Colonic mucosa (tissue), 4 donors: ENCODE measurements at regions of chr1 and their contacts with region 1.

Region 1: DNA sequence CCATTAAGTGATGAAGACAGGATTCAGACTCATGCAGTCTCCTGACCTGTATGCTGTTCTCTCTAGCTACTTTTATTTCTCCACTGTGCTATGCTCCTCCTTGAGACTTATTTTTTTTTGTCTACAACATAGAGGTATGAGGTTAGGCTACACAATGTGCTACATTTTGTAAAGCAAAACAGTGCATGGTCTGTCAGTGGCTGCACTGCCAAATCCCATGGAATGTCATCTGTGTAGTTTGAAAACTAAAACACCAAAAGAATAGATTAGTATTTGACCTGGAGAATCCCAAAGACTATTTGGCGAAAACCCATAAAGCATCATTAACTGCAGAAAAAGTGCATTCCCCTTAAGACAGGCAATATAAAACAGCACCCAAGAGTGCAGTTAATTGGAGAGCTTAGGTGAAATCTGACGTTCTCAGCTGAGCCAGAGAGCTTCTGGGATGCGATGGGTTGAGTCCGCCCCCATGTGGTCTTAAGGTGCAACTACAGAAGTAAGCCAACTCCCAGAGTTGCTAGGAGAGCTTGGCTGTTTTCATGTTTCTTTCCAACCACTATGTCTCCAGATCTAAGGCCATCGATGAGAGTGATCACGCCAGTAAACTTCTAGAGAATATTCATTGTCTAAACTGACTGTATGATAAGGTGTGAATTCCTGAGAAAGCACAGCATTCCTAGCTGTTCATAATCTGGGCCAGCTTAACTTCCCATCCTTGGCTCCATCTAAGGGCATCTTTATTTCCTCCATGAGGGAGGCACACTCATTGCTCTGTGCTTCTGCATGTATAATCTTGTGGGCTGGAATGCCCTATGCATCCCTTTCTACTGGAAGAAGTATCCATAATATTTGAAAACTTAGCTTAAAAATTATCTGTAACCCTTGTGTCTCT is 20.7 kb upstream of the CYP2J2 start:
- DNase-seq: peak; percentile 63
- H3K4me3 ChIP-seq: no peak overlapping the region
- H3K27ac ChIP-seq: no peak overlapping the region
- H3K4me1 ChIP-seq: no peaks in the 10 kb centered on the region
- H3K27me3 ChIP-seq: no peaks in the 10 kb centered on the region
- CTCF ChIP-seq: peak; percentile 84

Region 2: GRCh38 chr1:59498640-59499039 is 448.7 kb before region 1 on chr1:
- intact Hi-C with region 1: no loop called
- DNase-seq: no peak
- H3K4me3 ChIP-seq: no peak overlapping the region
- H3K27ac ChIP-seq: no peak overlapping the region
- H3K4me1 ChIP-seq: no peaks in the 10 kb centered on the region
- H3K27me3 ChIP-seq: no peaks in the 10 kb centered on the region
- CTCF ChIP-seq: no peak

Region 3: DNA sequence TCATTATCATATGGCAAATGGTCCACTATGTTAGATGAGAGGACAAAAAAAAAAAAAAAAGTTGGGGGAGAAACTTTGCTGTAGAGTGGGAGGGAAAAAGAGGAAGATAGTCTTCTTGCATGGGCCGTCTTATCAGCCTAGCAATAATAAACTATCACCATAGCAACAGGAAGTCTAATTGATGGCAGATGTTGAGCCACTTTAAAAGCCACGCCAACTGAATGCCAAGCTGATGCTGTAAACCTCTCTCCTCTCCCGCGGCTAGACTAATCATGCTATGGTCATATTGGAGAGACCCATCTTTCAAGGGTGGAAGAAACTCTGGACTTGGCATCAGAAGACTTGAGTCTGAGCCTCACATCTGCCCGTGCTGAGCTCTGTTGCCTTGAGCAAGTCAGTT is 254.7 kb before region 1 on chr1:
- intact Hi-C with region 1: no loop called
- DNase-seq: no peak
- H3K4me3 ChIP-seq: no peak overlapping the region
- H3K27ac ChIP-seq: no peak overlapping the region
- H3K4me1 ChIP-seq: no peaks in the 10 kb centered on the region
- H3K27me3 ChIP-seq: no peaks in the 10 kb centered on the region
- CTCF ChIP-seq: no peak

Region 4: GRCh38 chr1:59879574-59879973 is 67.7 kb before region 1 on chr1:
- intact Hi-C with region 1: loop called (anchors 2 kb)
- DNase-seq: peak; percentile 91
- H3K4me3 ChIP-seq: no peak overlapping the region
- H3K27ac ChIP-seq: no peak overlapping the region
- H3K4me1 ChIP-seq: no peaks in the 10 kb centered on the region
- H3K27me3 ChIP-seq: no peaks in the 10 kb centered on the region
- CTCF ChIP-seq: peak; percentile 59

Region 5: GRCh38 chr1:60035921-60036320 is 88.6 kb after region 1 on chr1:
- intact Hi-C with region 1: no loop called
- DNase-seq: no peak
- H3K4me3 ChIP-seq: no peak overlapping the region
- H3K27ac ChIP-seq: no peak overlapping the region
- H3K4me1 ChIP-seq: peaks cover 8% of the 10 kb centered on the region
- H3K27me3 ChIP-seq: no peaks in the 10 kb centered on the region
- CTCF ChIP-seq: no peak